ENCODE measurements at regions of chr4 and their contacts with region 1.

Region 1: GRCh38 chr4:95248720-95249425 is 299.9 kb downstream of the UNC5C start:
- DNase-seq: peak in 2 of 4 experiments; percentile 18 to 48
- ATAC-seq: peak; percentile 74
- H3K4me3 ChIP-seq: no peak overlapping the region
- H3K27ac ChIP-seq: peak overlapping the region; percentile 55
- H3K4me1 ChIP-seq: peaks cover 15 to 32% of the 10 kb centered on the region in 2 experiments; a peak in 4 of 5 replicates
- H3K27me3 ChIP-seq: no peaks in the 10 kb centered on the region
- CTCF ChIP-seq: no peak
- EP300 ChIP-seq: 0 out of 2 replicates have a peak, but pooled peaks have one; percentile 29
- POLR2A ChIP-seq: no peak
- RAD21 ChIP-seq: no peak

Region 2: GRCh38 chr4:95204873-95205272 is 44.0 kb before region 1 on chr4:
- CTCF ChIA-PET with region 1: no interaction called
- POLR2A ChIA-PET with region 1: no interaction called
- in situ Hi-C with region 1: no loop called
- intact Hi-C with region 1: no loop called
- DNase-seq: peak in 2 of 4 experiments; percentile 22
- ATAC-seq: peak; percentile 83
- H3K4me3 ChIP-seq: no peak overlapping the region
- H3K27ac ChIP-seq: no peak overlapping the region
- H3K4me1 ChIP-seq: no peaks in the 10 kb centered on the region; a peak in 1 of 5 replicates
- H3K27me3 ChIP-seq: peaks cover 0 to 9% of the 10 kb centered on the region in 2 experiments; a peak in 1 of 5 replicates
- CTCF ChIP-seq: peak; percentile 39 to 56 (median 45)
- EP300 ChIP-seq: no peak
- POLR2A ChIP-seq: no peak
- RAD21 ChIP-seq: peak in 1 of 2 experiments; percentile 29; a peak in 1 of 4 replicates

Region 3: GRCh38 chr4:95289028-95289634 is 40.3 kb after region 1 on chr4:
- CTCF ChIA-PET with region 1: no interaction called
- POLR2A ChIA-PET with region 1: no interaction called
- in situ Hi-C with region 1: no loop called
- intact Hi-C with region 1: loop called (anchors 2 kb)
- DNase-seq: peak; percentile 58 to 89 (median 70)
- ATAC-seq: peak; percentile 91
- H3K4me3 ChIP-seq: no peak overlapping the region
- H3K27ac ChIP-seq: peak overlapping the region; percentile 82
- H3K4me1 ChIP-seq: peaks cover 5 to 26% of the 10 kb centered on the region in 2 experiments; a peak in 4 of 5 replicates
- H3K27me3 ChIP-seq: no peaks in the 10 kb centered on the region
- CTCF ChIP-seq: no peak
- EP300 ChIP-seq: peak; percentile 97
- POLR2A ChIP-seq: no peak
- RAD21 ChIP-seq: no peak